Dorsolateral prefrontal cortex (tissue), 120 donors: ENCODE measurements at regions of chr13 and their contacts with region 1.

Region 1: DNA sequence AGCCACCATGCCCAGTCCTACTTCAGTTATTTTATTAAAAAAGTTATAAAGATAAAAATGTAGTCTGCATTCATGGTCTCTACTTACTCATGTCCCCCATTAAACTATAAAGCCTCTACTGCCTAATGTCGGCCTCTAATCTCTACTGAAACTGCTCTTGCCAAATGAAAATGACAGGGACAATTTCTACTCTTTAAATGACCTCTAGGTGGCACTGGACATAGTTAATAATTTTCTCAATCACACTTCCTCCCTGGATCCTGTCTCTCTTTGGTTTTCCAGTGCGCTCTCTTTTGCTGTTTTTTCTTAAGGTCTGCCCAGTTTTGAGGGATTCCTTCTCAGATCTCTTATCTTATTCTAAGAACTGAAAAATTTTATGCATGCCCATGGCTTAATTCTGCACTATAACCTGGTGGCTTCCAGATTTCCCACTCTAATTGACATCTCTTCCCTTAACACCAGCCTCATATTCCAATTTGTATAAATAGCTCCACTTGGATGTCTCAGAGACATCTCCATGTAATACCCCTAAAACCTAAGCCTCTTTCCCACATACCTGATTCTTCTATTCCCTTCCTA is 54.3 kb downstream of the MTMR6 start:
- DNase-seq: no peak
- H3K4me3 ChIP-seq: no peak overlapping the region
- H3K27ac ChIP-seq: peak overlapping the region in 49 of 59 donors; percentile 3 to 84 (median 45)
- H3K27me3 ChIP-seq: peaks cover 0 to 4% (median 0%) of the 10 kb centered on the region in 45 donors
- CTCF ChIP-seq: peak; percentile 38 to 77 (median 65)

Region 2: GRCh38 chr13:25114220-25114619 is 118.8 kb before region 1 on chr13:
- intact Hi-C with region 1: loop called in 1 of 2 experiments (anchors 10 kb)
- DNase-seq: peak; percentile 72 to 89 (median 85)
- H3K4me3 ChIP-seq: peak overlapping the region in 16 of 59 donors; percentile 2 to 40 (median 16)
- H3K27ac ChIP-seq: peak overlapping the region in 37 of 59 donors; percentile 5 to 74 (median 50)
- H3K27me3 ChIP-seq: no peaks in the 10 kb centered on the region
- CTCF ChIP-seq: peak; percentile 64 to 99 (median 91)